Mammary epithelial cell (primary cell): ENCODE measurements at regions of chr11 and their contacts with region 1.

Region 1: DNA sequence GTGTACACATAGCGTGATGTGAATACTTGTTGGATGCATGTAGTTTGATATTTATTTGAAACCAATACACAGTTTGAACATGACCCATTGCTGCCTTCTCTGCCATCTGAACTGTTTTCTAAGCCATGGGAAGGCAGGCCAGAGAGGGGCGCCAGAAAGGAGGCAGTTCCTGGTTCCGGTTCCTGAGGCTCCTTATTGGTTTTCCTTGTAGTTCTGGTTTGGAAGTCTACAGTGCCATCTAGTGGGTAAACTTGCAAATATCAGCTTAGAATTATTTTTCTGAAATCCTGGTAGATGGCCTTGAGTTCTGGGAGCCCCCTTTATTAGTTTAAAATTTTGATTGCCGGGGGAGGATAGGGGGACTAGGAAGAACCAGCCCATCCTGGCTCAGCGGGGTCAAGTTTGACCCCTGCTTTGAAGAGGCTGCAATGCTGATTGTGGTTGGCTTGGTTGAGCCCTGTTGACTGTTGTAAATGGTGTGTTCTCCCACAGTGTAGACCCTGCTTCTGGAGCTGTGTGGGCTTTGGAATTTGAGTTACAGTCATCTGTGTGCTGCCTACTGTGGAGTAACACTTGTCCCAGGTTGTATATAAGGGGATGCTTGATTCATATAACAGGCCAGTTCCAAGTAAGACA is 48.4 kb downstream of the GRAMD1B start:
- DNase-seq: peak; percentile 37
- H3K4me3 ChIP-seq: no peak overlapping the region
- H3K27ac ChIP-seq: no peak overlapping the region
- H3K4me1 ChIP-seq: peaks cover 4% of the 10 kb centered on the region
- H3K27me3 ChIP-seq: peaks cover 5% of the 10 kb centered on the region
- CTCF ChIP-seq: peak; percentile 59 to 71

Region 2: GRCh38 chr11:122863704-122864326 is 614.7 kb before region 1 on chr11:
- CTCF ChIA-PET with region 1: no interaction called
- dilution Hi-C with region 1: no loop called
- in situ Hi-C with region 1: no loop called
- intact Hi-C with region 1: loop called (anchors 5 kb)
- DNase-seq: no peak
- H3K4me3 ChIP-seq: no peak overlapping the region
- H3K27ac ChIP-seq: no peak overlapping the region
- H3K4me1 ChIP-seq: peaks cover 6% of the 10 kb centered on the region
- H3K27me3 ChIP-seq: no peaks in the 10 kb centered on the region
- CTCF ChIP-seq: peak; percentile 85 to 90

Region 3: DNA sequence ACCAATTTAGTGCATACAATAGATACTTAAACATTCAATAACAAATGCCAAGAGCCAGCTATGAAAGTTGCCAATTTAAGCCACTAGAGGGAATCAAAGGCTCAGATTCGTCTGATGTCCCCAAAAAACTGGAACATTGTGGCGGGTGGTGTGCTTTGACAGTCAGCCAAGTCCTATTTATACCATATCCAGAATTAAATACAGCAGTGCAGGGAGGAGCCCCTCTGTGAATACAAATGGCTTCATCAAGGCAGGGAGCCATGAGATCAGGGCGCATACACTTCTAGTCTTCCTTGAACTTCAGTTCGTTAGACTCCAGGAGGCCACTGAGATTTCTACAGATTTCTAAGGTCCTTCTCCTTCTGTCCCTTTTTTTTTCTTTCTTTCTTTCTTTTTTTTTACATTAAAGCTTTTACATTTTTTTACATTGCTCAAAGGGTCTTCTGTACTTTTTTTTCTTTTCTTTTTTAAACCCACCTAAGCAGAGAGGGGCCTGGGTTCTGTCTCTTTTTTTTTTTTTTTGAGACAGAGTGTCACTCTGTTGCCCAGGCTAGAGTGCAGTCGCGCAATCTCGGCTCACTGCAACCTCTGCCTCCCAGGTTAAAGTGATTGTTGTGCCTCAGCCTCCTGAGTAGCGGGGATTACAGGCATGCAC is 375.0 kb before region 1 on chr11:
- CTCF ChIA-PET with region 1: no interaction called
- dilution Hi-C with region 1: no loop called
- in situ Hi-C with region 1: loop called in 1 of 2 experiments (anchors 25 kb)
- intact Hi-C with region 1: loop called (anchors 1 kb)
- DNase-seq: peak; percentile 27
- H3K4me3 ChIP-seq: no peak overlapping the region
- H3K27ac ChIP-seq: no peak overlapping the region
- H3K4me1 ChIP-seq: peaks cover 5% of the 10 kb centered on the region
- H3K27me3 ChIP-seq: no peaks in the 10 kb centered on the region
- CTCF ChIP-seq: peak; percentile 42 to 70

Region 4: GRCh38 chr11:123246749-123247495 is 231.5 kb before region 1 on chr11:
- CTCF ChIA-PET with region 1: no interaction called
- dilution Hi-C with region 1: no loop called
- in situ Hi-C with region 1: no loop called
- intact Hi-C with region 1: loop called (anchors 2 kb)
- DNase-seq: peak; percentile 59
- H3K4me3 ChIP-seq: no peak overlapping the region
- H3K27ac ChIP-seq: no peak overlapping the region
- H3K4me1 ChIP-seq: peaks cover 3% of the 10 kb centered on the region
- H3K27me3 ChIP-seq: no peaks in the 10 kb centered on the region
- CTCF ChIP-seq: peak; percentile 92 to 99

Region 5: DNA sequence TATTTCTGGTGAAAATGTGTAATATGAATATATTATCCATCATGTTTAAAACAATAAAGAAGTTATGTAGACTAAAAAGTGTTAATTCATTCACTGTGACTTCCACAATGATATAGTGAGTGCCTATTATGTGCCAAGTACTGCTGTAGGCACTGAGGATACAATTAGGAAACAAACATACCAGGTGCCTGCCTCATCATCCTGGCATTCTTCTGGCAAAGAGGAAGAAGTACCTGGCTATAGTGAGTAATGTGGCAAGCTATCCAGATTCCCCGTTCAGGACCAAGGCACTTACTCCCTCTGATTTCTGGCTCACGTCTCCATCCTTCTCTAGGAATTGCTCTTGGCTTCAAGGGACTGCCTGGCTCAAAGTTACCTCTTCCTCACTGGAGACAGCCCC is 205.9 kb before region 1 on chr11:
- CTCF ChIA-PET with region 1: interaction called, 13 read pairs
- dilution Hi-C with region 1: no loop called
- in situ Hi-C with region 1: no loop called
- intact Hi-C with region 1: no loop called
- DNase-seq: peak; percentile 75
- H3K4me3 ChIP-seq: no peak overlapping the region
- H3K27ac ChIP-seq: no peak overlapping the region
- H3K4me1 ChIP-seq: peaks cover 8% of the 10 kb centered on the region
- H3K27me3 ChIP-seq: peaks cover 1% of the 10 kb centered on the region
- CTCF ChIP-seq: no peak

Region 6: DNA sequence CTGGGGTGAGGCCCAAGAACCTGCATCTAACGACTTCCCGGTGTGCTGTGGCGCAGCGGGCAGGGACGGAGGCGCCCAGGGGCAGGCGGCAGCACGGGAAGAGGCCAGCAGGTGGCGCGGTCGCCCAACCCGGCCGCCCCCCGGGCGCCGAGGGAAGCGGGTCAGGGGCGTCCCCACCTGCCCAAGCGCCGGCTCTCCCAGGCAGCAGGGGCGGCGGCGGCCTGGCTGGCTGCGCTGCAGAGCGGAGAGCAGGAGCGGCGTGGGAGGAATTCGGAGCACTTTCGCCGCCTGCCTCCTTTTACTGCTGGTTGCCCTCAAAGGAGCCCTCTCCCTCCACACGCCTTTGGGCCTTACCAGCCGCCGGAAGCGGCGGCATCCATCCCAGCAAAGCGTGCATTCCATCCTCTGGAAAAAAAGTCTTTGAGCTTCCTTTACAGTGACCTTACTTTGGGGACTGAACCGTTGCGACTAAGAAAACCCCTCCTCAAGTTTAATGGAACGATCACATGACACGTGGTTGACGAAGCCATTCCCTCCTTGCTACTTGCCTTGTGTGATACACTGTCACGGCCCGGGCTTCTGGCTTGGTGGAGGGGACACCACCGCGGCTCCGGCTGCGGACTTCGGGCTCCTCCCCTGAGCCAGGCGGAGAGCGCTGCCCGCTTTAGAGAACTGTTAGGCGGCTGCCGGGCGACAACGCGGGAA is 176.6 kb before region 1 on chr11:
- CTCF ChIA-PET with region 1: no interaction called
- dilution Hi-C with region 1: no loop called
- in situ Hi-C with region 1: loop called in 1 of 2 experiments (anchors 5 kb)
- intact Hi-C with region 1: loop called (anchors 1 kb)
- DNase-seq: peak; percentile 26
- H3K4me3 ChIP-seq: peak overlapping the region; percentile 11 to 41 (median 40)
- H3K27ac ChIP-seq: no peak overlapping the region
- H3K4me1 ChIP-seq: peaks cover 12% of the 10 kb centered on the region
- H3K27me3 ChIP-seq: peaks cover 4% of the 10 kb centered on the region
- CTCF ChIP-seq: peak; percentile 53 to 73

Region 7: DNA sequence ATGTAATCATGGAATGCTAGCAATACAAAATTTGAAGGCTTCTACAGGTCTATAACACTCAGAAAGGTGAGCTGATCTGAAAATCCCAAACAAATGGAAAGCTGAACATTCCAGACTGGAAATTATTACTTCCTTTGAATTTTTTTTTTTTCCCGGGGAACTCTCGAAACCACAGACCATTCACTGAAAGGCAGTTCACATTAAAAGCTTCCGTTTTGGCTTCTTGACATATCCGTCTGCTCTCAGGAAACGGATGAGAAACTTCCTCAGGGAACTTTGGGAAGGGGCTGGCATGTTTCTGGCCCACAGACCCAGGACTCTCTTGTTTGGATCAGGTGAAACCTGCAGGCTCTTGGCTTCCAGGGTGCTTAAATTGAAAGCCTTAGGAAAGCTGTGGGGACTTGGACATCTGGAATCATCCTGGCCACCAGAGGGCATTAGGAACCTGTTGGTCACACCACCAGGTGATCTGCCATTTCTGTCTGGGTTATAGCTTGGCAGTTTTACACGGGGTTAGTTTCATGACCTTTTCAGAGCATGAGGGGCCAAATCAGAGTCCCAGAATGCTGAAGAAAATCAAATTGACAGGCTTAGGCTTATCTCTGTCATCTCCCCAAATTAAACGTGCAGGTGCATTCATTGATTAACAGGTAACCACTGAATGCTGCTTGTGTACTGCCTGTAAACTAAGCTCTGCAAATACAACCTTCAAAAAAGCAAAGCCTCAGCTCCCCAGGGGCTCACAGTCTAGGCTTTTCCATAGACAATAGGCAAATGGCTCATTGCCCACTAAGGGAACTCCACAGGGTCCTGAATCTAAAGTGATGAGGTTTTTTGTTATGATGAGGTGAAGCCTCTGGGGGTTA is 71.1 kb before region 1 on chr11:
- CTCF ChIA-PET with region 1: interaction called, 5 read pairs
- dilution Hi-C with region 1: no loop called
- in situ Hi-C with region 1: loop called (anchors 5 kb)
- intact Hi-C with region 1: loop called (anchors 1 kb)
- DNase-seq: peak; percentile 41
- H3K4me3 ChIP-seq: no peak overlapping the region
- H3K27ac ChIP-seq: no peak overlapping the region
- H3K4me1 ChIP-seq: no peaks in the 10 kb centered on the region
- H3K27me3 ChIP-seq: peaks cover 7% of the 10 kb centered on the region
- CTCF ChIP-seq: peak; percentile 84 to 87

Region 8: DNA sequence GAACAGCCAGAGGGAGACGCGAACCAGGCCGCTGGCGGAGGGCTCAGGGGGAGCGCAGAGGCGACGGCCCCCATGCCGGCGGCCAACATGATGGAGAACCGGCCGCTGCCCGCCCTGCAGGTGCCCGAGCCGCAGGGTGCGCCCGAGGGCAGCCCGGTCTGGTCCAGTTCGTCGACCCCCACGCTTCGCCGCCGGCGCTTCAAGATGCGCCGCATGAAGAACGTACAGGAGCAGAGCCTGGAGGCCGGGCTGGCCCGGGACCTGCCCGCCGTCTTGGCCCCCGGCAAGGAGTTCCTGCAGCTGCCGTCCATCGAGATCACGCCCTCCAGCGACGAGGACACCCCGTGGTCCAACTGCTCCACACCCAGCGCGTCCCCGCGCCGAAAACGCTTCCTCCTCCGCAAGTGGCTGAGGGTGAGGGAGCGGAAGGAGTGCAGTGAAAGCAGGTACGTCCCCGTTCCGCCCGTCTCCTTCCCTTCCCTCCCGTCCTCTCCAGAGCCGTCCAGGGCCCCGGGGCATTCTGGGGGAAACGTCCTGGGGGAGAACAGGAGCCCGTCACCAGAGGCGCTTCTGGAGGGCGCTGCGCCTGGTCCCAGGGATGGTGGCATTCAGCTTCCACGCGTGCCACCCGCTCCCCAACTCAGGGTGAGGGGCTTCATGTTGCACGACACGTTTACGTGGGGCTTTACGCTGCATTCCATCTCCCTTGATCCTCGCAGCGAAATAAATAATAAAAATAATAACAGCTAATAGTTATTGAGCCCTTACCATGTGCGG is 47.6 kb before region 1 on chr11:
- CTCF ChIA-PET with region 1: no interaction called
- dilution Hi-C with region 1: no loop called
- in situ Hi-C with region 1: no loop called
- intact Hi-C with region 1: no loop called
- DNase-seq: peak; percentile 1
- H3K4me3 ChIP-seq: peak overlapping the region; percentile 32 to 40 (median 33)
- H3K27ac ChIP-seq: no peak overlapping the region
- H3K4me1 ChIP-seq: peaks cover 11% of the 10 kb centered on the region
- H3K27me3 ChIP-seq: peaks cover 17% of the 10 kb centered on the region
- CTCF ChIP-seq: no peak

Region 9: GRCh38 chr11:123956752-123957151 is 478.3 kb after region 1 on chr11:
- CTCF ChIA-PET with region 1: no interaction called
- dilution Hi-C with region 1: no loop called
- in situ Hi-C with region 1: no loop called
- intact Hi-C with region 1: no loop called
- DNase-seq: no peak
- H3K4me3 ChIP-seq: no peak overlapping the region
- H3K27ac ChIP-seq: no peak overlapping the region
- H3K4me1 ChIP-seq: no peaks in the 10 kb centered on the region
- H3K27me3 ChIP-seq: no peaks in the 10 kb centered on the region
- CTCF ChIP-seq: no peak